HCT116 (cell line): ENCODE measurements at regions of chr17 and their contacts with region 1.

Region 1: DNA sequence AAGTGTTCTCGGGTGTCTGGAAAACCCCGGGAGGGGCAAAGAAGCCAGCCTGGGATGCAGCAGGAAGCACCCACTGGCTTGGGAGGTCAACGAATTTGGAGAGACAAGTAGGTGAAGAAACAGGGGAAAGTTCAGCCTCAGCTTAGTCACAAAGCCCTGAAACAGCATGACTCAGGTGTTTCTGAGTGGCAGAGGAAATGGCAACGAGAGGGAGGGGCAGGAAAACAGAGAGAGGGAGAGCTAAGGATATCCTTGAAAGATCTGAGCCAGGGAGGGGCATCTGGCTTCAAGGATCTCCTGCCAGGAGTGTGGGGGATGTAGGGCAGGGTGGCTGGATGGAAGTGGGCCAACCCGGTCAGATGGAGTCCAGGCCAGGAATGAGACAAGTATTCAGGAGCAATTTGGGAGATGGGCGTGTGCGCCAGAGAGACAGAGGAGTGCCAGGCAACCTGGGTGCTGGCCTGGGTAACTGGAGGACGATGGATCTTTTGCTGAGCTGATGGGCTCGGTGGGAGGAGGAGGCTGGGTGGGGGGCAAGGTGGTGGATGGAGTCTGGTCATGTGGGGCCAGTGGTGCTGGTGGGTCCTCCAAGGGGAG is 27.2 kb downstream of the ABCC3 start:
- DNase-seq: peak; percentile 92
- ATAC-seq: peak; percentile 82
- H3K4me3 ChIP-seq: peak overlapping the region; percentile 19 to 44
- H3K27ac ChIP-seq: peak overlapping the region; percentile 96
- H3K4me1 ChIP-seq: peaks cover 61 to 91% of the 10 kb centered on the region in 2 experiments
- H3K27me3 ChIP-seq: no peaks in the 10 kb centered on the region
- CTCF ChIP-seq: no peak
- POLR2A ChIP-seq: no peak
- RAD21 ChIP-seq: no peak

Region 2: DNA sequence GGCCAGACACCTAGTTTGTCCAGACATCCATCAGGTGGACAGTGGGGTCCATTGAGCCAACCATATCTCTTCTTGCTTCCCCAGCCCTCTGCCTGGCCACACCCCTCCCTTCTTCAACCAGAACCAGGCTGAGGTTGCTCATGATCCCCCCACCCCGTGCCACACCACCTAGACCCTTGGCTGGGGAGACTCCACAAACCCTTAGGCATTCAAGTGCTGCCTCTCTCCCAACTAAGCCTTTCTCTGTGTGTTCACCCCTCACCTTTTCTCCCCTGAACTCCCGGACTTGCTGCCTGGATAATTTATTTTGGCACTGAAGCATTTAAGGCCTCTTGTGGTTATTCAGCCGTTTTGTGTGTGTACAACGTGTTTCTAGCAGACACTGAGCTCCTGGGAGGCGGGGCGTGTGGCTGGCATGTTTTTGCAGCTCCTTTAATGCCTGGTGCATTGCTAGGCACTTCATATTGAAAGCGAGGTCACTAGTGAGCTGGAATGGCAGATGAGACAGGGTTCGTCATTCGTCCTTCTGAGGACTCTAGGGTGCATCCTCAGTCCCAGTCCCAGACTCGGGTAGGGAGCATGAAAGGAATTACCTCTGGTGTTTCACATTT is 72.7 kb before region 1 on chr17:
- CTCF ChIA-PET with region 1: no interaction called
- POLR2A ChIA-PET with region 1: no interaction called
- RAD21 ChIA-PET with region 1: no interaction called
- intact Hi-C with region 1: no loop called
- DNase-seq: no peak
- ATAC-seq: no peak
- H3K4me3 ChIP-seq: no peak overlapping the region
- H3K27ac ChIP-seq: no peak overlapping the region
- H3K4me1 ChIP-seq: no peaks in the 10 kb centered on the region
- H3K27me3 ChIP-seq: no peaks in the 10 kb centered on the region
- CTCF ChIP-seq: no peak
- POLR2A ChIP-seq: no peak
- RAD21 ChIP-seq: no peak

Region 3: GRCh38 chr17:50604513-50604912 is 57.4 kb before region 1 on chr17:
- CTCF ChIA-PET with region 1: no interaction called
- POLR2A ChIA-PET with region 1: no interaction called
- RAD21 ChIA-PET with region 1: no interaction called
- intact Hi-C with region 1: no loop called
- DNase-seq: no peak
- ATAC-seq: no peak
- H3K4me3 ChIP-seq: no peak overlapping the region
- H3K27ac ChIP-seq: no peak overlapping the region
- H3K4me1 ChIP-seq: no peaks in the 10 kb centered on the region
- H3K27me3 ChIP-seq: no peaks in the 10 kb centered on the region
- CTCF ChIP-seq: no peak
- POLR2A ChIP-seq: no peak
- RAD21 ChIP-seq: no peak

Region 4: GRCh38 chr17:50649042-50649904 is 12.6 kb before region 1 on chr17:
- CTCF ChIA-PET with region 1: interaction called, 3 read pairs
- POLR2A ChIA-PET with region 1: interaction called, 35 read pairs
- RAD21 ChIA-PET with region 1: no interaction called
- intact Hi-C with region 1: no loop called
- DNase-seq: peak; percentile 55
- ATAC-seq: peak; percentile 53; the same call in 1 of the 2 replicates
- H3K4me3 ChIP-seq: no peak overlapping the region
- H3K27ac ChIP-seq: no peak overlapping the region
- H3K4me1 ChIP-seq: peaks cover 12 to 40% of the 10 kb centered on the region in 2 experiments; a peak in 3 of 4 replicates
- H3K27me3 ChIP-seq: no peaks in the 10 kb centered on the region
- CTCF ChIP-seq: no peak
- POLR2A ChIP-seq: no peak
- RAD21 ChIP-seq: no peak

Region 5: DNA sequence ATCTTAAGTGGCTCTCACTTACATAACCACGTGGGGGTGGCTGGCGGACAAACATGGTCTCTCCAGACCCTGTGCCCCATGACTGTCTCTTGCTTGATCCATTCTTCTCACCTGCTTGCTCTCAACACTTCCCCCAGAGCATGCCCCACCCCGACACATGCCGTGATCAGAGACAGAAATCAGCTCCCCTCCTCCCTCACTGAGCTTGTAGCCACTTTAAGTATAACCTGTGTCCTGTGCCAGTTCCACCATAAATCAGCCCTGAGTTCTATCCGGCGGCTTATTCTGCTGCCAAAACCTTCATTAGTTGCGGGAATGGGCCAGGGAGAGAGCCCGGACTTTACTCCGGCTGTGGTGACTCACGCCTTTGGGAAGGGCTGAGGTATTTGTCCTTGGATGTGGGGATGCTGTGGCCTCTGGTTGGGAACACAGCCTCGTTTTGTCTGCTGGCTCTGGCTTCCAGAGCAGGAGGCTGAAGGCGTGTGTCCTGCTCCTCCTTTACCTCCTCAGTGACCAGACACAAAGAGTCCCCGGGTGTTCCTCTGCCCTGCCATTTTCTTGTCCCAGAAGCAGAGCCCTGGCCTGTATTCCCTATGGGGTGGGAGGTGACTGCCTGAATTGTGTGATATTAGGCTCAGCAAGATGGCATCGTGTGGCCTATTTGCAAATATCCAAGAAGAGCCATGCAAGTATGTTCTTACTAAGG is 24.8 kb after region 1 on chr17:
- CTCF ChIA-PET with region 1: interaction called, 3 read pairs
- POLR2A ChIA-PET with region 1: interaction called, 19 read pairs
- RAD21 ChIA-PET with region 1: no interaction called
- intact Hi-C with region 1: no loop called
- DNase-seq: peak; percentile 92
- ATAC-seq: peak; percentile 74
- H3K4me3 ChIP-seq: peak overlapping the region; percentile 13 to 46
- H3K27ac ChIP-seq: peak overlapping the region; percentile 97
- H3K4me1 ChIP-seq: peaks cover 83 to 98% of the 10 kb centered on the region in 2 experiments
- H3K27me3 ChIP-seq: no peaks in the 10 kb centered on the region
- CTCF ChIP-seq: no peak
- POLR2A ChIP-seq: peak; percentile 33
- RAD21 ChIP-seq: no peak; the same call in 1 of the 2 replicates